Caco-2 (cell line): ENCODE measurements at regions of chr12 and their contacts with region 1.

Region 1: GRCh38 chr12:96194971-96195844 is 1.0 kb downstream of the ELK3 start:
- DNase-seq: no peak
- H3K4me3 ChIP-seq: peak overlapping the region; percentile 45
- H3K4me3 Mint-ChIP-seq: peak overlapping the region; percentile 98
- H3K27ac Mint-ChIP-seq: no peak overlapping the region
- H3K4me1 ChIP-seq: no peaks in the 10 kb centered on the region; the same call in 1 of the 2 replicates
- H3K4me1 Mint-ChIP-seq: peaks cover 6% of the 10 kb centered on the region
- H3K27me3 ChIP-seq: peaks cover 2% of the 10 kb centered on the region; the same call in 1 of the 2 replicates
- H3K27me3 Mint-ChIP-seq: peaks cover 14% of the 10 kb centered on the region
- CTCF ChIP-seq: no peak

Region 2: DNA sequence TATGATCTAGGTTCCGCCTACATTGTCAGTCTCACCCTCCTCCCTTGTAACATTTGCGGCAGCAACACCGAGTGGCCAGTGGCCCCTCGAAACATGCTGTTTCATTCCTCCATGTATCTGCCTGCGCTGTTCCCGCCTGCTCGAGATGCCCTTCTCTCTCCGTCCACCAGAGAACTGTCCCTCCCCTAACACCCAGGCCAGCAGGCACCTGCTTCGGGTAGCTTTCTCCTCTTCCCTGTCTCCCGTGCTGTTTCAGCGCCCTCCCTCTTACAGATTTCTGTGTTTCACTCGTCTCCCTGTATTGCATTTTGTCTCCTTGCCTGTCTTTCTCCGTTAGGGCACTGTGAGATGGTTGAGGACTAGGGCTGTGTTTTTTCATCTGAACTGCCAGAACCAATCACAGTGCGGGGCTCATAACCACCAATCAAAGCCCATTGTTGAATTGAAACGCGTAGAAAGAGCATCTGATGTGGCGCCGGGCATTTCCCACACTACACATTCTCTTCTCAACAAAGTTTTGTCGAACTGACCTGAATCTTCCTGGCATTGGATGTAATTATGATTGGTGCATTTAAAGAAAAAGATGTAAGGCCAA is 42.0 kb before region 1 on chr12:
- CTCF ChIA-PET with region 1: no interaction called
- POLR2A ChIA-PET with region 1: no interaction called
- intact Hi-C with region 1: loop called (anchors 5 kb)
- DNase-seq: no peak
- H3K4me3 ChIP-seq: no peak overlapping the region
- H3K4me3 Mint-ChIP-seq: no peak overlapping the region
- H3K27ac Mint-ChIP-seq: no peak overlapping the region
- H3K4me1 ChIP-seq: no peaks in the 10 kb centered on the region
- H3K4me1 Mint-ChIP-seq: no peaks in the 10 kb centered on the region
- H3K27me3 ChIP-seq: no peaks in the 10 kb centered on the region
- H3K27me3 Mint-ChIP-seq: no peaks in the 10 kb centered on the region
- CTCF ChIP-seq: no peak

Region 3: DNA sequence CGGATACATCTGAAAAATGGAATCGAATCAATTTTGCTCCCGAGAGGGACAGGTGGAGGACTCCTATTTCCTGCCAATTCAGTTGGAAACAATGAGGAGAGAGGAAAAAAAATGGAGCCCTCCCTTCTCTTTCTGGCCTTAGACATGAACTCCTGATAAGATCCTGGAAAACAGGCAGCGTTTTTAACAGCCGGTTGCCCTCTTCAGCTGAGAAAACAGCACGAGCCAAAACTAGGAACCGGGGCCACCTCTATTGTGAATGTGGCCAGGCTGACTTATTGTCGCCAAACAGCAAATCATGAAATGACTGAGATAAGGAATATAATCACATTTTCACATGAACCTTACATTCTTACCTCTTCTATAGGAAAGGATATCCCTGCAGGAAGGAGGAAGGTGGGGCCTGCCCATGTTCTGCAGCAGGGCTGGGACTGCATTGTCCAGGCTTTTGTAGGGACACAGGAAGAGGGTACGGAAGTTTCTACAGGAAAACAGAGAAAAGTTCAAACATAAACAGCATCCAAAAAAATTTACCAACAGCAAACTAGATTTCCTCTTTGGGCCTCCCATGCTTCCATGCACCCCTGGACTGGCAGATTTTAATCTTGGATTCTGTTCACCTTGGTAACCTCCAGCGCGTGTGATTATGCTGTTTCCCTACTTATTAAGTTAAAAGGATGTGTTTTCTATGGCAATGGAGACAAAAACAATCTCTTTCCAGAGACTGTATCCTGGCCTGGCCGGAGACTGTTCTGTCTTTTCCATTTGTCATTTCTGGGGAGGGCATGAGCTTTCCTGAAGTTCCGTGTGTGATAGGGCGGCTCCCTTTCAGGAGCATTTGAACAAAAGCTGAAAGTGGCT is 30.0 kb before region 1 on chr12:
- CTCF ChIA-PET with region 1: no interaction called
- POLR2A ChIA-PET with region 1: no interaction called
- intact Hi-C with region 1: no loop called
- DNase-seq: no peak
- H3K4me3 ChIP-seq: no peak overlapping the region
- H3K4me3 Mint-ChIP-seq: no peak overlapping the region
- H3K27ac Mint-ChIP-seq: no peak overlapping the region
- H3K4me1 ChIP-seq: no peaks in the 10 kb centered on the region
- H3K4me1 Mint-ChIP-seq: no peaks in the 10 kb centered on the region
- H3K27me3 ChIP-seq: no peaks in the 10 kb centered on the region; the same call in 1 of the 2 replicates
- H3K27me3 Mint-ChIP-seq: no peaks in the 10 kb centered on the region
- CTCF ChIP-seq: no peak

Region 4: GRCh38 chr12:96263449-96263902 is 68.3 kb after region 1 on chr12:
- CTCF ChIA-PET with region 1: no interaction called
- POLR2A ChIA-PET with region 1: no interaction called
- intact Hi-C with region 1: no loop called
- DNase-seq: no peak
- H3K4me3 ChIP-seq: no peak overlapping the region
- H3K4me3 Mint-ChIP-seq: no peak overlapping the region
- H3K27ac Mint-ChIP-seq: no peak overlapping the region
- H3K4me1 ChIP-seq: 0 out of 2 replicates have a peak, but pooled peaks cover 4% of the 10 kb centered on the region
- H3K4me1 Mint-ChIP-seq: peaks cover 11% of the 10 kb centered on the region
- H3K27me3 ChIP-seq: no peaks in the 10 kb centered on the region
- H3K27me3 Mint-ChIP-seq: no peaks in the 10 kb centered on the region
- CTCF ChIP-seq: no peak